ENCODE measurements at regions of chr18 and their contacts with region 1.

Region 1: GRCh38 chr18:73962256-73962655 is 185.4 kb downstream of the FBXO15 start:
- DNase-seq: no peak
- H3K4me3 ChIP-seq: no peak overlapping the region
- H3K27ac ChIP-seq: no peak overlapping the region
- H3K4me1 ChIP-seq: no peaks in the 10 kb centered on the region
- H3K27me3 ChIP-seq: no peaks in the 10 kb centered on the region
- CTCF ChIP-seq: no peak
- POLR2A ChIP-seq: no peak

Region 2: GRCh38 chr18:74006143-74006542 is 43.9 kb after region 1 on chr18:
- intact Hi-C with region 1: loop called (anchors 1 kb)
- DNase-seq: no peak
- H3K4me3 ChIP-seq: no peak overlapping the region
- H3K27ac ChIP-seq: no peak overlapping the region
- H3K4me1 ChIP-seq: no peaks in the 10 kb centered on the region
- H3K27me3 ChIP-seq: no peaks in the 10 kb centered on the region
- CTCF ChIP-seq: no peak
- POLR2A ChIP-seq: no peak

Measured in vagina (tissue), 2 donors.